ENCODE measurements at regions of chr6 and their contacts with region 1.

Region 1: DNA sequence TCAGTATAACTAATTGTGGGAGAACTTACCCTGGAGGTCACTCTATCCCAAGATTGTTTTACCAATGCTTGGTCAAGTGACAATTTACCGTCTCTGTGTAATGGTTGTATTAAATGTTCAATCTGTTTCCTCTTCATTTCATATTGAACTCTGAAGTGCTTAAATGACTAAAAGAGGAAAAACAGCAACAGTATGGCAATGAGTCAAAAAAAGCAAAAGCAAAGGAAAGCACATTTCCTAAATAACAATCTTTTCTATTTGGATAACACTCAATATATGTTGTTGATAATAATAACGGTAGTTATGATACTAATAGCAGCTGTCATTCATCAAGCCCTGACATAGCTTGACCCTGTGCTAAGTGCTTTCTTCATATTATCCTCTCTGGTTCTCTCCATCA is 152.4 kb downstream of the SYNE1 start:
- DNase-seq: no peak
- H3K4me3 ChIP-seq: no peak overlapping the region
- H3K27ac ChIP-seq: no peak overlapping the region
- H3K27me3 ChIP-seq: no peaks in the 10 kb centered on the region
- CTCF ChIP-seq: no peak

Region 2: DNA sequence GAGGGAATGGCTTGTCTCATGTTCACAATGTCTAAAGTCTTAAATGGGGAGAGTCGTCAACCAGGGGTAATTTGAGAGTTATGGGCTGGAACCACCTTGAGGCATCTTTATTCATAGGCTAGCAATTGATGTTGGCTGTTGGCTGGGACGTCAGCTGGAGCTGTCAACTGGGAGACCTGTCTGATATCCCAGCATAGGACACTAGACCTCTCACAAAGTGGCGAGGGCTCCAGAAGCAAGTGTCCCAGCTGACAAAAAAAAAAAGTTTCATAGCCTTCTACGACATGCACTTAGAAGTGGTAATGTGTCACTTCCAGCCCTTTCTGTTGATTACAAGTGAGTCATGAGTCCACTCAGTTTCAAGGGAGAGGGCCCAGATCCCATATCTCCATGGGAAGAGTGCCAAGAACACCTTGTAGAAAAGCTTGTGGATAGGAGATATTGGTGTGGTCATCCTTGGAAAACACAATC is 399.3 kb before region 1 on chr6:
- intact Hi-C with region 1: no loop called
- DNase-seq: no peak
- H3K4me3 ChIP-seq: no peak overlapping the region
- H3K27ac ChIP-seq: no peak overlapping the region
- H3K27me3 ChIP-seq: no peaks in the 10 kb centered on the region
- CTCF ChIP-seq: no peak

Region 3: GRCh38 chr6:152642989-152643388 is 158.2 kb after region 1 on chr6:
- intact Hi-C with region 1: loop called in 1 of 2 experiments (anchors 10 kb)
- DNase-seq: peak in 9 of 10 donors; percentile 27 to 72 (median 52)
- H3K4me3 ChIP-seq: no peak overlapping the region
- H3K27ac ChIP-seq: peak overlapping the region in 1 of 59 donors; percentile 2
- H3K27me3 ChIP-seq: no peaks in the 10 kb centered on the region
- CTCF ChIP-seq: peak in 54 of 56 donors; percentile 21 to 70 (median 48)

Measured in dorsolateral prefrontal cortex (tissue), 120 donors.